ENCODE measurements at regions of chr14 and their contacts with region 1.

Region 1: DNA sequence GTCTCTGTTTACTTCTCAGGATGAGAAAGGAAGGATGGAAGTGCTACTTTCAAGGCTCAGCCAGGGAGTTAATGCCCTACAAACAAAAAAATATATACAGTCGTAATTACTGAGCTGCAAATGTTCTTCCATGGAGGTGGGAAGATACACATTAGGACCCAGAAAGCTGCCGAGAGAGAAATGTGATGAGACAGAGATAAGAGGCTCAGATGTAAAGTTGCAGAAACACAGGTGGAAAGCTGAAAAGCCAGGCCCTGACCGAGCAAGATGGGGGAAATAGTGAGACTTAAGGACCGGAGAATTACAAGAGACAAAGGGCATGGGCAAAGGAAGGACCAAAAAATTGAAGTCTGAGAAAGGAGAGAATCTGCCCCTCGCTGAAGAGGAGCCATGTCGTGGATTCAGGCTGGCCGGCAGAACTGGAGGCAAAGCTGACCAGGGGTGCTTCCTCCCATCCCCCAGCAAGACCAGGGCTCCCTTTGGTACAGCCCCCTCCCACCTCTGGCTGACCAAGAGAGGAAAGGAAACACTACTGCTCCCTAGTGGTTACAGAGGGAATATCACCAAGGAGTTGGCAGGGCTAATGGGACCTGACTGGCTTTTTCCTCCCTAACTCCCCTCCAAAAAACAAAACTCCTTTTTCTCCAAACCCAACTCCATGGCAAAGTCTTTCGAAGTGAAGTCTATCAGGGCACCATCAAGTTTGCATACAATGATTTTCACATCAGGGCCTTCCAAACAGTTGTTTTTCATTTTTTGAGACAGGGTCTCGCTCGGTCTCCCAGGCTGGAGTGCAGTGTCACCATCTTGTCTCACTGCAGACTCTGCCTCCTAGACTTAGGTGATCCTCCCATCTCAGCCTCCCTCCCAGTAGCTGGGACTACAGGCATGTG is 12.1 kb downstream of the ZFHX2 start:
- DNase-seq: peak; percentile 38
- H3K4me3 Mint-ChIP-seq: no peak overlapping the region
- H3K27ac Mint-ChIP-seq: no peak overlapping the region
- H3K4me1 Mint-ChIP-seq: no peaks in the 10 kb centered on the region
- H3K27me3 Mint-ChIP-seq: peaks cover 24% of the 10 kb centered on the region

Region 2: GRCh38 chr14:23478111-23478759 is 61.3 kb before region 1 on chr14:
- CTCF ChIA-PET with region 1: interaction called, 114 read pairs
- DNase-seq: peak; percentile 79
- H3K4me3 Mint-ChIP-seq: no peak overlapping the region
- H3K27ac Mint-ChIP-seq: no peak overlapping the region
- H3K4me1 Mint-ChIP-seq: peaks cover 2% of the 10 kb centered on the region
- H3K27me3 Mint-ChIP-seq: no peaks in the 10 kb centered on the region

Region 3: GRCh38 chr14:23528555-23528954 is 10.9 kb before region 1 on chr14:
- CTCF ChIA-PET with region 1: interaction called, 40 read pairs
- DNase-seq: no peak
- H3K4me3 Mint-ChIP-seq: no peak overlapping the region
- H3K27ac Mint-ChIP-seq: no peak overlapping the region
- H3K4me1 Mint-ChIP-seq: peaks cover 10% of the 10 kb centered on the region
- H3K27me3 Mint-ChIP-seq: no peaks in the 10 kb centered on the region

Region 4: GRCh38 chr14:23631702-23632460 is 92.4 kb after region 1 on chr14:
- CTCF ChIA-PET with region 1: no interaction called
- DNase-seq: peak; percentile 71
- H3K4me3 Mint-ChIP-seq: no peak overlapping the region
- H3K27ac Mint-ChIP-seq: no peak overlapping the region
- H3K4me1 Mint-ChIP-seq: peaks cover 5% of the 10 kb centered on the region
- H3K27me3 Mint-ChIP-seq: peaks cover 25% of the 10 kb centered on the region